ENCODE measurements at regions of chr4 and their contacts with region 1.

Region 1: DNA sequence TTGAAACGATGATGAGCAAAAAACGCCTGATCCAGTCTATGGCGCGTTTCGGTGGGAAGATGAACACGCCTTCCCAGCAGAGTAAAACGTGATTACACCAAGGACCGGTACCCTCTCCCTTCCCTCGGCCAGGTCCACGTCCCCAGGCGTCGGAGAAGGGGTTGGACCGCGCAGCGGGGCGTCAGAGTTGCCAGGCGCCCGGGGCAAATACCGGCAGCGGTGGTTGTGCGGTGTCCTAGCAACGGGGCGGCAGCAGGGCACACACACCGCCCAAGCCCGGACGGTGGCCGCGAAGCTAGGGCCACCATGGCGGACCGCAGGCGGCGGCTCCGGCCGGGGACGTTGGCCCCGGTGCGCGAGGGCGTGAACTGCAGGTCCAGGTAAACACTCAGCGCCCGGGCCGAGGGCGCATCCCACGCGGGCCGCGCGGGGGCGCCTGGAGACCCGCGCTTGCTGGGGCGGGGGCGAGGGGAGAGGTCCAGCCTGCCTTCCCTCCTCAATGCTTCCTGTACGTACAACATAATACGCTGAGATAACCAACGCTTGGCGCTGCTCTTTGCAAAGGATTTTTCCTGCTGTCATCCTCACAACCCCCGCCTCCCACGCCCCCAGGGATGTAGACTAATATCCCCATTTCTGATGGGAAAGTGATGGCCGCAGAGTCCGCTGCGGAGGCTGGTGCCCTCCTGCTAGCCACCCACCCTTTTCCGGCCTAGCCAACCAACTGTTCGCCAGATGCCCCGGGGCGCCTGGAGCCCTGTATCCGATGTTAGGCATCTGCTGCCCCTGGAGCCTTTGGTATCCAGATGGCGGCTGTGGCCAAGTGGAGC is at the start of gene FAM47E:
- DNase-seq: peak; percentile 79 to 92 (median 83)
- H3K4me3 ChIP-seq: peak within 1 kb of the TSS; percentile 22 to 64 (median 44)
- H3K27ac ChIP-seq: peak within 1 kb of the TSS in 1 of 5 donors; percentile 59
- H3K4me1 ChIP-seq: peaks cover 4 to 7% of the 10 kb centered on the region in 2 donors
- H3K27me3 ChIP-seq: no peaks in the 10 kb centered on the region
- CTCF ChIP-seq: peak in 2 of 6 experiments; percentile 37 to 39
- POLR2A ChIP-seq: peak; percentile 18 to 19
- total RNA-seq, gene FAM47E: 2.8 to 8.0 (median 4.8) TPM

Region 2: DNA sequence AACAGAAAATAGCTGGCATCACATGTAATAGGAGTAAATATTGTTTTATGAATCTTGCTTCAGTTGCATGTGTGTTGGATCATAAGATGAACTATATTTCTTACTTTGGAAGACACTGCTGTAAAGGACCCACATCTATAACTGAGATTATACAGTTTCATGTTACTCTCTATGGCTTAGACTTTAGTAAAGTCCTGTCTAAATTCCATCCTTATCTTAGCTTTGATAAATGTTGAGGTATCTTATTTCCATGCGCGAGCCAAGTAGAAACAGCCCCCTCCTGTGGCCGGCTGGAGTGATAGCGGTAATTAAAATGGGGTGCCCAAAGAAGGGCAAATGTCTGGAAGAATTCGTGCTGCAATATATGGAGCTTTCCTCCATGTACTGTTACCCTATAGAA is 126.3 kb after region 1 on chr4:
- intact Hi-C with region 1: loop called in 1 of 2 experiments (anchors 10 kb)
- DNase-seq: peak in 6 of 7 donors; percentile 43 to 63 (median 56)
- H3K4me3 ChIP-seq: no peak overlapping the region
- H3K27ac ChIP-seq: no peak overlapping the region
- H3K4me1 ChIP-seq: peaks cover 0 to 7% of the 10 kb centered on the region in 2 donors
- H3K27me3 ChIP-seq: no peaks in the 10 kb centered on the region
- CTCF ChIP-seq: peak; percentile 28 to 68 (median 58)
- POLR2A ChIP-seq: no peak